Posterior vena cava (tissue), 2 donors: ENCODE measurements at regions of chr6 and their contacts with region 1.

Region 1: GRCh38 chr6:133277228-133277899 is 36.2 kb downstream of the EYA4 start:
- DNase-seq: no peak

Region 2: DNA sequence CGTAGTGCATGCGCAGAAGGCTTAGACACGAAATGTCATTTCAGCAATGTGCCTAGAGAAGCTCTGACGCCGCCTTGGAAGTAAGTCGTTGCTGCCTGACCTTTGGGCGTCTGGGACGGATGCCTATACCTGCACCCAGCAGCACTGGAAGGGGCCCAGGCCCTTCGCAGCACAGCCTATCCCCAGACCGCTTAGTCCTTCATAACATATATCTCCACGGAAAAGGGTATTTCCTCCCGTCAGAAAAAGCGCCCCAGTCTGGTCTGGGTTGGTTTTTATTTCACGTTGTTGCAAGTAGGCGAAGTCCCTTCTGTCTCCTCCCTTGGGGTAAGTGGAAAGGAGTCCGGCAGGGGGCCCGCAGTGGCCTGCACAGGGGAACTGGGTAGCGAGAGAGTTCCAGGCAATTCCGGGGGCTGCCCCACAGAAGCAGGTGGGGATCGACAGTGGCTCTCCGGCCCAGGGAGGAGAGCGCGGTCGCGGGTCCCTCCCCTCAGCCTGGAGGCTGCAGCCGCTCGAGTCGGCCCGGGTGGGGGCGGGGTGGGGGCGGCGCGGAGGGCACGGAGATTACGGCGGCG is 36.8 kb before region 1 on chr6:
- intact Hi-C with region 1: loop called in 1 of 2 experiments (anchors 1 kb)
- DNase-seq: no peak